Gastrocnemius medialis (tissue), 4 donors: ENCODE measurements at regions of chr18 and their contacts with region 1.

Region 1: GRCh38 chr18:43789234-43790000 is 512.1 kb upstream of the SYT4 start:
- DNase-seq: no peak
- ATAC-seq: no peak
- H3K4me3 ChIP-seq: no peak overlapping the region
- H3K27ac ChIP-seq: no peak overlapping the region
- H3K4me1 ChIP-seq: no peaks in the 10 kb centered on the region
- H3K27me3 ChIP-seq: no peaks in the 10 kb centered on the region
- CTCF ChIP-seq: peak in 1 of 5 experiments; percentile 25
- POLR2A ChIP-seq: no peak

Region 2: GRCh38 chr18:43772907-43773306 is 16.5 kb before region 1 on chr18:
- in situ Hi-C with region 1: no loop called
- intact Hi-C with region 1: no loop called
- DNase-seq: peak in 1 of 2 donors; percentile 18
- ATAC-seq: peak; percentile 44 to 50
- H3K4me3 ChIP-seq: no peak overlapping the region
- H3K27ac ChIP-seq: no peak overlapping the region
- H3K4me1 ChIP-seq: peaks cover 0 to 9% of the 10 kb centered on the region in 2 donors
- H3K27me3 ChIP-seq: no peaks in the 10 kb centered on the region
- CTCF ChIP-seq: no peak
- POLR2A ChIP-seq: no peak

Region 3: DNA sequence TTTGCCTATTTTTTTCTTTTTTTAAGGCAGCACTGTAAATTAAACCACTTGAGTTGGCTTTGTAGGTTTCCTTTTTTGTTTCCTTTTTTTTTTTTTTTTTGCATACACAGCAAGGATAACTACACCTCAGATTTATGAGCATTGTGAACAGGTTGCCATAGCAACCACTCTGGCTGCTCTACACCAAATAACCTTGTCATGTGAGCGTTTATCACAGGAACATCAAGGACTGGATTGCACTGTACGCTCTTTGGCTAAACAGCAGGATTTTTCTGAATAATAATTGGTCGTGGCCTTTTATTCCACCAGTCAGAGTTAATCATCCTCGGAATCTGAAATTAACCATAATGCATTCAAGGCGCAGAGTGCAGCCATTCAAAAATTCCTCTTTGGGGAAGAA is 1626.8 kb after region 1 on chr18:
- in situ Hi-C with region 1: loop called in 1 of 4 experiments (anchors 25 kb)
- intact Hi-C with region 1: no loop called
- DNase-seq: no peak
- ATAC-seq: no peak
- H3K4me3 ChIP-seq: no peak overlapping the region
- H3K27ac ChIP-seq: no peak overlapping the region
- H3K4me1 ChIP-seq: peaks cover 8 to 9% of the 10 kb centered on the region in 2 donors
- H3K27me3 ChIP-seq: no peaks in the 10 kb centered on the region
- CTCF ChIP-seq: no peak
- POLR2A ChIP-seq: no peak